ENCODE measurements at regions of chr7 and their contacts with region 1.

Region 1: DNA sequence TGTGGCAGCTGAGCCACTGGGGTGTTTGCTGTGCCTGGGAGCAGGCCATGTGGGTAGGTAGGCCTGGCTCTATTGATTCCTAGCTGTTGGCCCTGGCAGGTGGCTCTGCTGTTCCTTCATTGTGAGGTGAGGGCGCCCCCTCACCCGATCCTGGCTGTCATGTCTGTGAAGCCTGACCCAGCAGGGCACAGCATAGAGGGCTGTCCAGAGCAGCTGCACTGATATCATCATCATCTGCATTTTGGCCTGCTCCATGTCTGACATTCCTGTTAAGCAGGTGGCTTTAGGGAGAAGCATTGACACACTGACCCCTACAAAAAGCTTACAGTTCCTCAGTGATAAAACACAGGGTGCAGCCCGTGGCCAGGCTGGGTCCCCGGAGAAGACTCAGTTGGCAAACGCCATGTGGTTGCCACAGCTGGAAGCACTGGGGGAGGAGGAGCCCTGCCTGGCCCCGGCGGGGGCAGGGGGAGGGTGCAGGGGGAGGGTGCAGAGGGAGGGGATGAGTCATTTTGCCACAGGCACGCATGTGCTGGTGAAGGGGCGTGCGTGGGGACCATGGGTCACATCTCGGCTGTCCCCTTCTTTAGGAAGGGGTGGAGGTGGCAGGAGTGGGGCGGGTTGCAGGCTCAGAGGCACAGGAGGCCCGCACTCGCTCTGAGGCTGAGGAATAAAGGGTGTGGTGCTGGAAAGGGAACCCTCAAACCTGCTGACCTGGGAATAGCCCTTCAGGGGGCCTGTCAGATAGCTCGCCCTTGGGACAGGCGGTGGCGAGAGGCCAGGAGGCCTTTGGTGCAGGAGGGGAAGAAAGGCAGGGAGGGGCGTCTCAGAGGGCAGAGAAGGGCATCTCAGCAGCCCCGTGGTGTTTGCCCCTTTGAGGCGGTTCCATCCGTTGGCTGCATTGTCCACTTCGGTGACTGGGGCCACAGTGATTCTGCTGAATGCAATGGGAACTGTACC is 31.6 kb downstream of the IKZF1 start:
- DNase-seq: peak; percentile 78
- H3K4me3 ChIP-seq: no peak overlapping the region
- H3K27ac ChIP-seq: no peak overlapping the region
- H3K4me1 ChIP-seq: peaks cover 5 to 22% of the 10 kb centered on the region in 2 experiments; a peak in 2 of 4 replicates
- H3K27me3 ChIP-seq: no peaks in the 10 kb centered on the region
- CTCF ChIP-seq: no peak
- EP300 ChIP-seq: peak in 1 of 2 experiments; percentile 84; a peak in 2 of 4 replicates
- RAD21 ChIP-seq: peak; percentile 69

Region 2: DNA sequence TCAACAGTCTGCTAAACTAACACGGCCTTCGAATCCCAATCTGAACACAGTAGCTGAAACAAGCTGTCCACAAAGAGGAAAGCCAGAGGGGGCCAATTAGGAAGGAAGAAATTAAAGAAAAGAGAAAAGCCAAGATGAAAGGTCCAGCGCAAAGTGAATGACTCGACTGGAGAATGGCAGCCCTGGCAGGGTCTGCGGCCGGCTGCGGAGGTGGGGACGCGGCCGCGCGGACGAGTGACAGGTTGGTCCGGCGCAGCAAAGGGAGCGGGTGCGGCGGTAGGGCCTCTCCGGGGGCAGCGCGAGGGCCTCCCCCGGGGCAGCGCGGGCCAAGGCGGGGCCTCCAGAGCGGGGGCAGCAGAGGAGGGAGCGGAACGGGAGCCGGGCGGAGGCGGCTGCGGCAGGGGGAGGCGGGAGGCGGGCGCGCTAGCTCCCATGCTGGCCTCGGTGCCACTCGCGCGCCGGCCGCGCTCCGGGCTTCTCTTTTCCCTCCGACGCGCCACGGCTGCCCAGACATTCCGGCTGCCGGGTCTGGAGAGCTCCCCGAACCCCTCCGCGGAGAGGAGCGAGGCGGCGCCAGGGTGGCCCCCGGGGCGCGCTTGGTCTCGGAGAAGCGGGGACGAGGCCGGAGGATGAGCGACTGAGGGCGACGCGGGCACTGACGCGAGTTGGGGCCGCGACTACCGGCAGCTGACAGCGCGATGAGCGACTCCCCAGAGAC is 562.7 kb before region 1 on chr7 and contains the start of gene VWC2:
- CTCF ChIA-PET with region 1: no interaction called
- POLR2A ChIA-PET with region 1: no interaction called
- DNase-seq: peak; percentile 37
- H3K4me3 ChIP-seq: peak within 1 kb of the TSS in 1 of 2 experiments; percentile 49; a peak in 2 of 4 replicates
- H3K27ac ChIP-seq: no peak within 1 kb of the TSS
- H3K4me1 ChIP-seq: no peaks in the 10 kb centered on the region
- H3K27me3 ChIP-seq: peaks cover 65% of the 10 kb centered on the region
- CTCF ChIP-seq: no peak
- EP300 ChIP-seq: no peak
- RAD21 ChIP-seq: no peak
- polyA plus RNA-seq, gene VWC2: not detected in 2 replicates

Region 3: DNA sequence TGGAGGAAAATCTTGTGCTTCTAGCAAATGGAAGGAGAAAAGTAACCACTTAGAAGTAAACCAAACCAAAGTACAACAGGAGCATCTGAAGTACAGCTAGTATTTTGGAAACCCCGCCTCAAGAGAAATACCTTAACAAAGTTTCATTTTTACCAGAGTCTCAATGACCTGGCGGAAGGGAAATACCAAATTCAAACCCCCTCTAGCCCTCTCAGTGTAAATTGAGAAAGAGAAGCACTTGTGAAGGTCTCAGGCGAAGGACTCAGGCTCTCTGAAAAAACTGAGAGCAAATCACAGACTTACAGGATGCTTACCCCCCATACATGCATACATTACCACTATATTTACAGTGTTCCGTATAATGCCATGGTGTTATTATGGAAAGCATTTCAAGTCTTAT is 313.1 kb before region 1 on chr7:
- CTCF ChIA-PET with region 1: no interaction called
- POLR2A ChIA-PET with region 1: no interaction called
- DNase-seq: no peak
- H3K4me3 ChIP-seq: no peak overlapping the region
- H3K27ac ChIP-seq: no peak overlapping the region
- H3K4me1 ChIP-seq: no peaks in the 10 kb centered on the region
- H3K27me3 ChIP-seq: no peaks in the 10 kb centered on the region
- CTCF ChIP-seq: no peak
- EP300 ChIP-seq: no peak
- RAD21 ChIP-seq: no peak

Region 4: GRCh38 chr7:50346553-50347497 is 10.8 kb after region 1 on chr7:
- CTCF ChIA-PET with region 1: interaction called, 15 read pairs
- POLR2A ChIA-PET with region 1: interaction called, 5 read pairs
- DNase-seq: no peak
- H3K4me3 ChIP-seq: no peak overlapping the region
- H3K27ac ChIP-seq: no peak overlapping the region
- H3K4me1 ChIP-seq: peaks cover 0 to 18% of the 10 kb centered on the region in 2 experiments; a peak in 2 of 4 replicates
- H3K27me3 ChIP-seq: peaks cover 6% of the 10 kb centered on the region
- CTCF ChIP-seq: no peak
- EP300 ChIP-seq: no peak
- RAD21 ChIP-seq: no peak

Region 5: GRCh38 chr7:50369143-50370026 is 33.3 kb after region 1 on chr7:
- CTCF ChIA-PET with region 1: interaction called, 10 read pairs
- POLR2A ChIA-PET with region 1: no interaction called
- DNase-seq: peak; percentile 57
- H3K4me3 ChIP-seq: no peak overlapping the region; a peak in 1 of 4 replicates
- H3K27ac ChIP-seq: no peak overlapping the region
- H3K4me1 ChIP-seq: no peaks in the 10 kb centered on the region
- H3K27me3 ChIP-seq: 0 out of 2 replicates have a peak, but pooled peaks cover 5% of the 10 kb centered on the region
- CTCF ChIP-seq: peak; percentile 51
- EP300 ChIP-seq: no peak
- RAD21 ChIP-seq: peak; percentile 74

Measured in SK-N-SH (cell line).